ENCODE measurements at regions of chr6 and their contacts with region 1.

Region 1: DNA sequence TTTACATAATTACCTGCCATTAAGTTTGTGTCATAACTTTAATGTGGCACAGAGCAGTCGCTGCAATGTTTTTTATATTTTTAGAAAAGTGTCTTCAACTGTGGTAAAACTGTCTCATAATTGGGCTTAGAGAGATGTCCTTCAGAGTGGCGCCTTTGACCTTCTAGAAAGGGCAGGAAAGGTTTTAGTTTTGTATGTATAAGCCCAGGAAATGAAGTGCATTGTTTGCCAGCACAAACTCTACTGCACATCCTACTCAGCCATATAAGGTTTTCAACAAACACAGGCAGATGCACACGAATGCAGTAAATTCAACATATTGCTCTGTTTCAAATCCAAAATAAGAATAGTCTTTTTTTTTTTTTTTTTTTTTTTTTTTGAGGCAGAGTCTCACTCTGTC is 201.4 kb downstream of the ALDH8A1 start:
- DNase-seq: no peak
- ATAC-seq: no peak
- H3K4me3 ChIP-seq: no peak overlapping the region
- H3K27ac ChIP-seq: no peak overlapping the region
- H3K4me1 ChIP-seq: peaks cover 0 to 4% (median 0%) of the 10 kb centered on the region in 9 donors
- H3K27me3 ChIP-seq: no peaks in the 10 kb centered on the region
- CTCF ChIP-seq: no peak

Region 2: DNA sequence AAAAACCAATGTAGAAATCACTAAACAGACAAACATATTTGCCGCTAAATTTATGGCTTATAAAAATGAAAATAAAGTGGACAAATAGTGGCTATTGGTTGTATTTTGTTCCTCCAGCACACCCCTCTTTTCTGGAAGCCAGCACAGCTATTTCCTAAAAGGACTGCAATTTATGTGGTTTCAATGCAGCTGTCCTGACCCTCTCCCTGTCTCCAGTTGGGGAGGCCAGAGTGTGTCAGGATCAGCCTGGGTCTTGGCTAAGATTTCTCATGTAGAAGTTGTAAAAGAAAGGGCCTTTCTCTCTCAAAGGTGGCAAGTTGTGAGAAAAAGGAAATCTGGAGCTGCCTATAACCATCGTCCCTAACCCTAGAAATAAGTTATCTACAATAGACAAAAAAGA is 35.9 kb after region 1 on chr6:
- intact Hi-C with region 1: loop called in 1 of 10 experiments (anchors 2 kb)
- DNase-seq: no peak
- ATAC-seq: no peak
- H3K4me3 ChIP-seq: no peak overlapping the region
- H3K27ac ChIP-seq: no peak overlapping the region
- H3K4me1 ChIP-seq: no peaks in the 10 kb centered on the region
- H3K27me3 ChIP-seq: no peaks in the 10 kb centered on the region
- CTCF ChIP-seq: no peak

Measured in heart right ventricle (tissue), 16 donors.